H1 (cell line): ENCODE measurements at regions of chr1 and their contacts with region 1.

Region 1: DNA sequence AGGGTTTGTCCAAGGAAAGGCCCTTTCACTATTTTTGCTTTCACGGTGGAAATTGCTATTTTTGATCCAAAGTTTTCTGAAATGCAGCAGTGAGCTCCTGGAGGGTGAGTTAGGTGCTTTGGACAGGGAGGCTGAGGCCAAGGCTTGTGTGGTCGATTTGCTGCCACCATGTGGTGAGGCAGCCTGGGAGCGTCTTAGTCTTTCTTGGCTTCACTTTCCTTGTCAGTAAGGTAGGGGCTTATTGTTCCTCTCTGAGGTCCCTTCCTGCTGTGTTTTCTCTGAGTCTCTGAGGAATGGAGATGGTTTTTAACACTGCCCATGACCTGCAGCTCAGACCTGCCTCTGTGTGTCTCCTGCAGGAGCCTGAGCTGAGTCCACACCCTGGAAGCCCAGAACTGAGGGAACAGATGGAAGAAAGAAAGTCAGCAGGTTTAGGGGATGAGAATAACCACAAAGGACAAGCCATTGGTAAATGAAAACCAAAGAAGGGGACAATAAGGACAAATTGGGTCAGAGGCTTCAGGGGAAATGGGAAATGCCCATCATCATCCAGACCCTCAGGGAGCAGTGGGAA is 20.1 kb upstream of the S100A10 start:
- DNase-seq: peak in 1 of 2 experiments; percentile 72
- H3K4me3 ChIP-seq: no peak overlapping the region
- H3K27ac ChIP-seq: no peak overlapping the region
- H3K4me1 ChIP-seq: peaks cover 0 to 3% (median 1%) of the 10 kb centered on the region in 4 experiments; a peak in 2 of 7 replicates
- H3K27me3 ChIP-seq: no peaks in the 10 kb centered on the region
- CTCF ChIP-seq: peak; percentile 82 to 92 (median 89)
- EP300 ChIP-seq: no peak
- POLR2A ChIP-seq: no peak
- RAD21 ChIP-seq: peak; percentile 57 to 62

Region 2: GRCh38 chr1:151720974-151721787 is 292.6 kb before region 1 on chr1 and contains the start of gene RIIAD1:
- CTCF ChIA-PET with region 1: no interaction called
- POLR2A ChIA-PET with region 1: no interaction called
- DNase-seq: no peak
- H3K4me3 ChIP-seq: peak within 1 kb of the TSS; percentile 55 to 85 (median 60)
- H3K27ac ChIP-seq: no peak within 1 kb of the TSS
- H3K4me1 ChIP-seq: peaks cover 2 to 11% (median 4%) of the 10 kb centered on the region in 4 experiments
- H3K27me3 ChIP-seq: peaks cover 6 to 34% (median 28%) of the 10 kb centered on the region in 4 experiments
- CTCF ChIP-seq: no peak
- EP300 ChIP-seq: no peak
- POLR2A ChIP-seq: no peak
- RAD21 ChIP-seq: no peak
- total RNA-seq, gene RIIAD1: not detected in 2 replicates

Region 3: DNA sequence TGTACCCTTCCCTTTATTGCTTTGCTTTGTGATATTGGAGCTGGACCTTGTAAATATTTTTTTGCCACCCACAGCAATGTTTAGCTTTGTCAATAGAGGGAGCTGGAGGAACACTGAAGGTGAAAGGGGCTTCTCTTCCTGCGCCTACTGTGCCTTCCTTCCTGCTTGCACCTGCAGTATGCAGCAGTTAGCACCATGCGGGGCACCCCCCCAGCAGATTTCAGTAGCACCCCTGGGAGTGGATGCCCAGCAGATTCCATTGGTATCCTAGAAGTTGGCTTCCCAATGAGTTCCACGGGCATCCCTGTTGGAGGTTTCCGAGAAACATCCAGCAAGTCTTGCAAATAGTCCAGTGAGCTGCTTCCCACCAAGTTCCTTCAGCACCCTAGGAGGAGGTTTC is 45.7 kb before region 1 on chr1:
- CTCF ChIA-PET with region 1: interaction called, 23 read pairs
- POLR2A ChIA-PET with region 1: no interaction called
- DNase-seq: peak in 1 of 2 experiments; percentile 67
- H3K4me3 ChIP-seq: no peak overlapping the region
- H3K27ac ChIP-seq: no peak overlapping the region
- H3K4me1 ChIP-seq: peaks cover 0 to 11% (median 2%) of the 10 kb centered on the region in 4 experiments; a peak in 5 of 7 replicates
- H3K27me3 ChIP-seq: no peaks in the 10 kb centered on the region
- CTCF ChIP-seq: peak; percentile 38 to 86 (median 82)
- EP300 ChIP-seq: no peak
- POLR2A ChIP-seq: no peak
- RAD21 ChIP-seq: peak; percentile 93

Region 4: GRCh38 chr1:151980287-151981177 is 33.2 kb before region 1 on chr1:
- CTCF ChIA-PET with region 1: interaction called, 12 read pairs
- POLR2A ChIA-PET with region 1: no interaction called
- DNase-seq: no peak
- H3K4me3 ChIP-seq: no peak overlapping the region
- H3K27ac ChIP-seq: no peak overlapping the region
- H3K4me1 ChIP-seq: peaks cover 0 to 3% (median 0%) of the 10 kb centered on the region in 4 experiments; a peak in 1 of 7 replicates
- H3K27me3 ChIP-seq: no peaks in the 10 kb centered on the region
- CTCF ChIP-seq: no peak
- EP300 ChIP-seq: no peak
- POLR2A ChIP-seq: no peak
- RAD21 ChIP-seq: no peak

Region 5: GRCh38 chr1:152024158-152024557 is 10.4 kb after region 1 on chr1:
- CTCF ChIA-PET with region 1: interaction called, 12 read pairs
- POLR2A ChIA-PET with region 1: no interaction called
- DNase-seq: no peak
- H3K4me3 ChIP-seq: no peak overlapping the region
- H3K27ac ChIP-seq: no peak overlapping the region
- H3K4me1 ChIP-seq: peaks cover 0 to 5% (median 2%) of the 10 kb centered on the region in 4 experiments; a peak in 2 of 7 replicates
- H3K27me3 ChIP-seq: no peaks in the 10 kb centered on the region
- CTCF ChIP-seq: no peak
- EP300 ChIP-seq: no peak
- POLR2A ChIP-seq: no peak
- RAD21 ChIP-seq: no peak

Region 6: DNA sequence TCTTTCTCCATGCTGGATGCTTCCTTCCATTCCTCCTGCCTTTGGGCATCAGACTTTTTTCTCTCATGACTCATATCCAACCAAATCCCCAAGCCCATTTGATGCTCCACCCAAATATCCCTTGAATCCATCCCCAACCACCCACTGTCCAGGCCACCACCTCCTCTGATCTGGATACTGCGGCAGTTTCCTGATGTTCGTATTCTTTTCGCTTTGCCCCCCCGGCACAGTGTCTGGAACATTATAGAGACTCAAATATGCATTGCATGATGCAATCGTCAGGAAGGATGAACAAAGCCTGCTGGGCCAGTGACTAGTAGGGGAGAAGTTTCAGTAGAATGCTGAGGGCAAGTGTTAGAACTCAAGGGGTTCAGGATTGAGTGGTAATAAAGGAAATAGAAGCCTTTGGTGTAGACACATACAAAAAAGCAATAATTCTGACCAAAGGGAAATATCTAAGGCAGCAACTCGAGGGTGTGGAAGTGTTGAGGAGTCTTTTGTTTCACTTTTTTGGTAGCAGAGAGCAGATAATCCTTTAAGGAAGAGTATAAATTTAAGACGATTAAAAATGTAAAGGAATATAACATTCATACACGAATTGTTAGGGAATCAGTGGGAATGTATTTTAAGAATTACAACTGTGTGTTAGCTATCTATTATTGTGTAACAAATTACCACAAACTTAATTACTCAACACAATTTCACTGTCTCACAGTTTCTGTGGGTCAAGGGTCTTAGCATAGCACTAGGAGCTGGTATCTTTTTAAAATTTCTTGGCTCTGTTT is 15.6 kb after region 1 on chr1:
- CTCF ChIA-PET with region 1: interaction called, 20 read pairs
- POLR2A ChIA-PET with region 1: interaction called, 3 read pairs
- DNase-seq: no peak
- H3K4me3 ChIP-seq: no peak overlapping the region
- H3K27ac ChIP-seq: no peak overlapping the region
- H3K4me1 ChIP-seq: peaks cover 0 to 3% (median under 1%) of the 10 kb centered on the region in 4 experiments; a peak in 2 of 7 replicates
- H3K27me3 ChIP-seq: no peaks in the 10 kb centered on the region
- CTCF ChIP-seq: no peak
- EP300 ChIP-seq: no peak
- POLR2A ChIP-seq: no peak
- RAD21 ChIP-seq: no peak

Region 7: DNA sequence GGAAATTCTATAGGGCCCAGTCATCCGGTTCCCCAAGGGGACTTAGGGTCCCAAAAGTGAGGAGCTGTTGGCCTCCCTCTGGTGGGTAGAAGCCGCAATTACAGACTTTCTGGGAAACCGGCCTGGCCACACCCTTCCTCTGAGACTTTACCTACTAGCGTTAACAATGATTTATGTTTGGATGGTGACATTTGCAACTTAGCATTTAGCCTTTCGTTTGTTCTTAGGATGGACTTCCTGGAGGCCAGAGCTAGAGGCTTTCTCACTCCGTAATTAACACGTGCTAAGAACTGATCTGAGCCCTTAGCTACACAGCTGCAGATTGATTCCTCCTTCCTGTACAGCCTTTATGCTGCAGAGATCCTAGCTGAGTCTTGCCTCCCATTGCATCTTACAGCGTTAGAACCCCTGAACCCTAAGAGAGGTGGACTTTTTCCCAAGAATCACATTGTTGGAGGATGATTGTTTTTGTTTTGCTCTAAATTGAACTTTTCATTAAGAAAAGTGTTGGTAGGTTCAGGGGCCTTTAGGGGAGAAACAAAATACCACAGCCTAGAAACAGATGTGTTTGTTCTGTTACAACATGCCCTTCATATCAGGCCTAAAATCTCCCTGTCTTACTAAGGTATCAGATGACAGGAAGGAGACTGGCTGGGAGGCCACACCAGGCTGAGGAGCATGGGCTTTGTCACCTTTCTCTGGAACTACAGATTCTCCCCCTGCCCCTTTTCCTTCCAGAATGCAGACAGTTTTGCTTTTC is 21.1 kb after region 1 on chr1:
- CTCF ChIA-PET with region 1: interaction called, 20 read pairs
- POLR2A ChIA-PET with region 1: interaction called, 6 read pairs
- DNase-seq: peak in 1 of 2 experiments; percentile 87
- H3K4me3 ChIP-seq: peak overlapping the region in 2 of 4 experiments; percentile 74 to 76; a peak in 4 of 8 replicates
- H3K27ac ChIP-seq: no peak overlapping the region
- H3K4me1 ChIP-seq: peaks cover 4 to 12% (median 6%) of the 10 kb centered on the region in 4 experiments
- H3K27me3 ChIP-seq: no peaks in the 10 kb centered on the region; a peak in 2 of 7 replicates
- CTCF ChIP-seq: peak; percentile 56 to 79 (median 73)
- EP300 ChIP-seq: no peak
- POLR2A ChIP-seq: no peak
- RAD21 ChIP-seq: peak; percentile 42 to 56; a peak in 3 of 4 replicates

Region 8: GRCh38 chr1:152039886-152040285 is 26.1 kb after region 1 on chr1:
- CTCF ChIA-PET with region 1: interaction called, 20 read pairs
- POLR2A ChIA-PET with region 1: interaction called, 6 read pairs
- DNase-seq: no peak
- H3K4me3 ChIP-seq: no peak overlapping the region
- H3K27ac ChIP-seq: no peak overlapping the region
- H3K4me1 ChIP-seq: peaks cover 3 to 11% (median 8%) of the 10 kb centered on the region in 4 experiments
- H3K27me3 ChIP-seq: peaks cover 0 to 6% (median 0%) of the 10 kb centered on the region in 4 experiments; a peak in 4 of 7 replicates
- CTCF ChIP-seq: no peak
- EP300 ChIP-seq: no peak
- POLR2A ChIP-seq: no peak
- RAD21 ChIP-seq: no peak

Region 9: DNA sequence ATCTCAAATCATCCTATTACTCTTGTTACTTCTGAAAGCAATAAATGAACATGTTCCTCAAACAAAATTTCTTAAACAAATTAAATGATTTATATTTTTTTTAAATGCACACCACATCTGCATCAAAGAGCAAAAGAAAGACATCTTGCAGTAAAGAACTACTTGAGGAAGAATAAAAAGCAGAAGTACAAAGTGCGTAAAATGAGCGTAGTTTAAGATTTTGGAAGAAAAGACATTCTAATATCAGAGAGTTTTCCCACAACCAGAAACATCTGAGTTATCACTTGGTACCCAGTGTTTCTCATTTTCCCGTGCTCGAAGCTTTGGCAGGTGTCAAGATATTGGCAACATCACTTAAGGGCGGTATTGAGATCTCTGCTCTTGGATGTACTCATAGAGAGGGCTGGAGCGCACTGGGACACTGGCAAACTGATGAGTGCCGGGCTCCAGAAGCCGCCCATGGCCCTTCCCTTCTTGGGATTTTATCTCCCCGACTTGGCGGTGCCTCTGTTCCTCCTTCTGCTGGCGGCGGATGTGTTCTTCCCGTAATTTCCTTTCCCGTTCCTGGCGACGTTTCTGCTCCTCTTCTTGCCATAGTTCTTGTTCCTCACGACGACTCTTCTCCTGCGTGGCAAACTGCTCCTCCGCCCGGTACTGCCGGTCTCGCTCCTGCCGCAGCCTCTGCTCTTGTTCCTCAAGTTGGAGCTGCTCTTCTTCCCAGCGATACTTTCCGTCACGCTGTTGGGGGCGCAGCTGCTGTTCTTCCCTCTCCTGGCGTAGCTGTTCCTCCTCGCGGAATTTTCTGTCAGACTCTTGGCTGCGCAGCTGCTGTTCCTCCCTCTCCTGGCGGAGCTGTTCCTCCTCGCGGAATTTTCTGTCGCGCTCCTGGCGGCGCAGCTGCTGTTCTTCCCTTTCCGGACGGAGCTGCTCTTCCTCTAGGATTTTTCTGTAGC is 93.6 kb after region 1 on chr1:
- CTCF ChIA-PET with region 1: no interaction called
- POLR2A ChIA-PET with region 1: no interaction called
- DNase-seq: peak in 1 of 2 experiments; percentile 70
- H3K4me3 ChIP-seq: peak overlapping the region in 2 of 4 experiments; percentile 25 to 29; a peak in 3 of 8 replicates
- H3K27ac ChIP-seq: no peak overlapping the region
- H3K4me1 ChIP-seq: peaks cover 0 to 6% (median 4%) of the 10 kb centered on the region in 4 experiments; a peak in 5 of 7 replicates
- H3K27me3 ChIP-seq: peaks cover 46 to 62% (median 58%) of the 10 kb centered on the region in 4 experiments
- CTCF ChIP-seq: peak in 1 of 3 experiments; percentile 3; a peak in 1 of 4 replicates
- EP300 ChIP-seq: no peak
- POLR2A ChIP-seq: no peak
- RAD21 ChIP-seq: no peak